Common myeloid progenitor, CD34-positive (primary cell): ENCODE measurements at regions of chr19 and their contacts with region 1.

Region 1: DNA sequence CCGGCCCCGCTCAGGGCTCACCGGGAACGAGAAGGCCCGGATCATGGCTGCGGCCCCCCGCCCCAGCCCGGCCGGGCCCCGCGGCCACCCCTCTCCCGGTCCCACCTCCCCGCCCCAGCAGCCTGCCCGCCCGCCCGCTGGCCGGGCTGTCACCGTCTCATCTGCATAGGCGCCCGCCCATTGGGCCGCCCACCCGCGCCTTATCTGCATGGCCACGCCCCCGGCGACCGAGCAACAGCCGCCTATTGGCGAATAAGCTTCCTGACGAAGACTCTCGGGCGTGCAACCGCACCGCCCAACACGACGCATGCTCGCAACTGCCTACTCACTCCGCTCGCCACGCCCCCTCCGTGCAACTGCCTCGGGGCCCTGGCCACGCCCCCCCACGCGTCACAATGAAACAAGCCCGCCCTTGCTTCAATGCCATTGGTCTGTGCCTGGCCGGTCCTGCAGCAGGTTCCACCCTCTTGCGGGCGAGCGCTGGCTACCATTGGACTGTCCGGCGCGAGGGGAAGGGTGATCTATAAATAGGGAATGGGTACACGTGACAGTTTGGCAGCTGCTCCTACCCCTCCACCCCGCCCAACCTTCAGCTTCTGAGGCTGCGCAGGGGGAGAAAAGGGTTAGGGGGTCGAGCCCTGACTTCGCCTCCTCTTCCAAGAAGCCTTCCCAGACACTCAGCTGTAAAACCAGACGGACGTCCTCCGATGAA is at the start of gene DACT3:
- DNase-seq: peak; percentile 99 to 100 (median 100)
- H3K4me3 ChIP-seq: peak within 1 kb of the TSS in 6 of 7 experiments; percentile 9 to 69 (median 56)
- H3K27ac ChIP-seq: peak within 1 kb of the TSS in 1 of 2 experiments; percentile 25
- H3K4me1 ChIP-seq: peaks cover 0 to 31% (median 27%) of the 10 kb centered on the region in 4 experiments
- H3K27me3 ChIP-seq: peaks cover 0 to 33% (median 20%) of the 10 kb centered on the region in 5 experiments

Region 2: GRCh38 chr19:46600384-46601317 is 60.5 kb before region 1 on chr19:
- CTCF ChIA-PET with region 1: interaction called, 24 read pairs
- POLR2A ChIA-PET with region 1: interaction called, 3 read pairs
- DNase-seq: peak; percentile 98 to 99 (median 99)
- H3K4me3 ChIP-seq: peak overlapping the region; percentile 58 to 100 (median 95)
- H3K27ac ChIP-seq: peak overlapping the region; percentile 100
- H3K4me1 ChIP-seq: peaks cover 0 to 29% (median 28%) of the 10 kb centered on the region in 4 experiments
- H3K27me3 ChIP-seq: no peaks in the 10 kb centered on the region

Region 3: GRCh38 chr19:46614114-46614722 is 47.0 kb before region 1 on chr19:
- CTCF ChIA-PET with region 1: interaction called, 121 read pairs
- POLR2A ChIA-PET with region 1: interaction called, 4 read pairs
- DNase-seq: peak; percentile 71 to 83 (median 78)
- H3K4me3 ChIP-seq: no peak overlapping the region
- H3K27ac ChIP-seq: no peak overlapping the region
- H3K4me1 ChIP-seq: peaks cover 0 to 56% (median 51%) of the 10 kb centered on the region in 4 experiments
- H3K27me3 ChIP-seq: no peaks in the 10 kb centered on the region

Region 4: DNA sequence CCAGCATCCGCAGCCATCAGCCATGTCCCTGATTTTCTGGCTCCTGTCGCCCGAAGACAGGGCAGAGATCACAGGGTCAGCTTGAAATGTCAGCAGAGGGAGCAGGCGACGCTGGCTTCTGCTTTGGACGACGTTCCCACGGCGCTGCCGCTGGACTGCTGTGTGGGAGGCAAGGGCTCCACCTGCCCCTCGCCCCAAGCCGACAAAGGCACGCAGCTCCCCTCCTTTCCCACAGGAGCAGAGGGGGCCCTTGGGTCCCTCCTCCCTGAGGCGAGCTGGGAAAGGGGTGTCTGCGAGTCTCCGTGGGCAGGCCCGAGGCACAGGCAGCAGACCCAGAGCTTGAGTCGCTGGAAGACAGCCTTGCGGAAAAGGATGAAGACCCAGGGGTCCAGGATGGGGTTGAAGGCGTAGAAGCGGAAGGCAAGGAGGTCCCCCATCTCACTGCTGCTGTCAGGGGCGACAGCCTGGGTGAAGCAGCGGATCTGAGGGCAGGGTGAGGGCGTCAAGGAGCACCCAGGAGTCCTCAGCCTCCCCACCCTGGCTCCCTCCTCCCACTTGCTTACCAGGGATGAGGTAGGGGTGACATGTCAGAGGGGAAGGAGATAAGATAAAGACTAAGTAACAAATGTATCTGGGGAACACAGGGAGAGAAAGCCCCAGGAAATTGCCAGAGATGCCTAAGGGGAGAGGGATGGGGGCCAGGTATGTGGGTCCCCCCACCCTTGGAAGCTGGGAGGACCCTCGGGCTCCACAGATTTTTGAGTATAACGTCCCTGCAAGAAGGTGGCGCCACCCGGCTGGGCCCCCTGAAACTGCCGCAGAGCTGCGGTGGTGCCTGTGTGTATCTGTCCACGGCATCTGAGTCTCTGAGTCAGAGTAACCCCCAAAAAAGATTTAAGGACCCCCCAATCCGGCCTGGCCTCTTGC is 39.7 kb before region 1 on chr19:
- CTCF ChIA-PET with region 1: interaction called, 121 read pairs
- POLR2A ChIA-PET with region 1: interaction called, 4 read pairs
- DNase-seq: peak in 1 of 3 donors; percentile 22
- H3K4me3 ChIP-seq: no peak overlapping the region
- H3K27ac ChIP-seq: peak overlapping the region in 1 of 2 experiments; percentile 25
- H3K4me1 ChIP-seq: peaks cover 3 to 86% (median 75%) of the 10 kb centered on the region in 4 experiments
- H3K27me3 ChIP-seq: no peaks in the 10 kb centered on the region

Region 5: GRCh38 chr19:46634045-46634655 is 27.0 kb before region 1 on chr19:
- CTCF ChIA-PET with region 1: interaction called, 25 read pairs
- POLR2A ChIA-PET with region 1: no interaction called
- DNase-seq: peak; percentile 85 to 92 (median 88)
- H3K4me3 ChIP-seq: peak overlapping the region in 5 of 7 experiments; percentile 37 to 76 (median 58)
- H3K27ac ChIP-seq: no peak overlapping the region
- H3K4me1 ChIP-seq: peaks cover 0 to 61% (median 49%) of the 10 kb centered on the region in 4 experiments
- H3K27me3 ChIP-seq: peaks cover 0 to 42% (median 9%) of the 10 kb centered on the region in 5 experiments

Region 6: GRCh38 chr19:46674416-46675183 is 13.4 kb after region 1 on chr19:
- CTCF ChIA-PET with region 1: interaction called, 12 read pairs
- POLR2A ChIA-PET with region 1: no interaction called
- DNase-seq: peak in 2 of 3 donors; percentile 22
- H3K4me3 ChIP-seq: no peak overlapping the region
- H3K27ac ChIP-seq: no peak overlapping the region
- H3K4me1 ChIP-seq: no peaks in the 10 kb centered on the region
- H3K27me3 ChIP-seq: no peaks in the 10 kb centered on the region

Region 7: DNA sequence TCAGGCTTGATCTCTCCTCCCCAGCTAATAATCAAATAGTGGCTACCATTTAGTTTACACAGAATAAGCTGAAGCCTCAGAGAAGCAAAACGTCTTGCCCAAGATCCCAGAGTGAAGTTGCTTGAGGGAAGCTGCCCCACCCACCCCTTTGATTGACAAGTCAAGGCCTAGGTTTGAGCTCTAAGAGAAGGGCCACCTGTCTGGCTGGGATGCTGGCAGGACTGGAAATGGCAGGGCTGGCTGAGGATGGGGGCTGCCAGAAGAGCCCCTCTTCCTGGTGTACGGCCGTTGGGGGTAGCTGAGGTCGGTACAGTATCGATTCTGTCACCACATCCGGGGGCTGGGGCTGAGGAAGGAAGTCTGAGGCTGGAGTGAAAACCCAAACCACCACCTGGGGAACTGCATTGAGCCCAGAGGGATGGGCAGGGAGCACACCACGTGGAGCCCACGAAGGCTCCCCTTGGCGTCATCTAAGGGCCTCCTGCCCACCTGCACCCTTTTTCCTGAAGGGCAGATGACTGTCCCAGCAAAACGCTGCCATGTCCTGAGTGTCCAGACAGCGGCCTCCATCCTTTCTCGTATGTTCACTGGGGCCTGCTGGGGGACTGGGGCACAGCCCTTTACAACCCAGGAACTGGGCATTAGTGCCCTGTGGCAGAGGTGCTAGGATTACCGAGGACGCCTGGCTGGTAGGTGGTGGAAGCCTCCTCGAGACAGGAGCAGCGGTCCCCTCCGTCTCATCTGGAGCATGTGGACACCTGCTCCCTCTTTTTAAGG is 57.2 kb after region 1 on chr19:
- CTCF ChIA-PET with region 1: no interaction called
- POLR2A ChIA-PET with region 1: no interaction called
- DNase-seq: peak; percentile 57 to 85 (median 81)
- H3K4me3 ChIP-seq: peak overlapping the region in 6 of 7 experiments; percentile 55 to 96 (median 86)
- H3K27ac ChIP-seq: peak overlapping the region in 1 of 2 experiments; percentile 89
- H3K4me1 ChIP-seq: peaks cover 16 to 89% (median 72%) of the 10 kb centered on the region in 4 experiments
- H3K27me3 ChIP-seq: no peaks in the 10 kb centered on the region

Region 8: GRCh38 chr19:46766569-46767317 is 105.6 kb after region 1 on chr19:
- CTCF ChIA-PET with region 1: no interaction called
- POLR2A ChIA-PET with region 1: no interaction called
- DNase-seq: peak; percentile 51 to 65 (median 58)
- H3K4me3 ChIP-seq: no peak overlapping the region
- H3K27ac ChIP-seq: no peak overlapping the region
- H3K4me1 ChIP-seq: no peaks in the 10 kb centered on the region
- H3K27me3 ChIP-seq: no peaks in the 10 kb centered on the region